H1 (cell line): ENCODE measurements at regions of chr11 and their contacts with region 1.

Region 1: GRCh38 chr11:20647976-20648565 is 21.3 kb upstream of the NELL1 start:
- DNase-seq: peak in 1 of 2 experiments; percentile 79
- H3K4me3 ChIP-seq: no peak overlapping the region
- H3K27ac ChIP-seq: no peak overlapping the region
- H3K4me1 ChIP-seq: peaks cover 0 to 5% (median 2%) of the 10 kb centered on the region in 4 experiments; a peak in 2 of 7 replicates
- H3K27me3 ChIP-seq: no peaks in the 10 kb centered on the region
- CTCF ChIP-seq: peak; percentile 4 to 88 (median 79)
- EP300 ChIP-seq: no peak
- POLR2A ChIP-seq: no peak
- RAD21 ChIP-seq: peak; percentile 90 to 96

Region 2: DNA sequence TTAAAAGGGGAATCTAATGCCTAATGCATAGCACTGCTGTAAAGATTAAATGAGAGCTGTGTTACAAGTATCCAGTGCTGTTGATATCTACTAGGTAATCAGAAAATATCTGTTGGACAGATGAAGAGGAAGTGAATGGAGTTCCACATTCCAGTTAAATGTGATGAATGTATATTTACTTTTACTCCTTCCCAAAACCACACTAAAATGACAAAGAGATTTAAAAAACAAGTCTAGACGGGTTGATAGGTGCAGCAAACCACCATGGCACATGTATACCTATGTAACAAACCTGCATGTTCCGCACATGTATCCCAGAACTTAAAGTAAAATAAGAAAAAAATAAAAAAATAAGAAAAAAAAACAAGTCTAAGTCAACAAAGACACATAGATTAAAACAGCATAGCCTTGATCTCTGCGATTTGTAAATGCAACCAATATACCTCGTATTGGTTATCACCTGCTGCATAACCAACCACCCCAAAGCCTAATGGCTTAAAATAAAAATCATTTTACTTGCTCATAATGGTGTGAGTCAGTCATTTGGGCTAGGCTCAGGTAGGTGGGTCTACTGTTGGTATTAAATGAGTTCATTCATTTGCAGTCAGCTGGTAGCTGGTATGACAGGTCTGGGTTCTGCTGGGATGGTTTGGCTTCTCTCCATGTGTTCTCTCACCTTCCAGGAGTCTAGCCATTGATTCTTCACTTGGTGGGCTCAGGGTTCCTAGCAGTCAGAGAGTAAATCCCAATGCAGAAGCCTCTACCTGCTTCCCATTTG is 88.4 kb before region 1 on chr11:
- CTCF ChIA-PET with region 1: no interaction called
- POLR2A ChIA-PET with region 1: no interaction called
- DNase-seq: no peak
- H3K4me3 ChIP-seq: no peak overlapping the region
- H3K27ac ChIP-seq: no peak overlapping the region
- H3K4me1 ChIP-seq: no peaks in the 10 kb centered on the region
- H3K27me3 ChIP-seq: no peaks in the 10 kb centered on the region
- CTCF ChIP-seq: no peak
- EP300 ChIP-seq: no peak
- POLR2A ChIP-seq: no peak
- RAD21 ChIP-seq: no peak

Region 3: DNA sequence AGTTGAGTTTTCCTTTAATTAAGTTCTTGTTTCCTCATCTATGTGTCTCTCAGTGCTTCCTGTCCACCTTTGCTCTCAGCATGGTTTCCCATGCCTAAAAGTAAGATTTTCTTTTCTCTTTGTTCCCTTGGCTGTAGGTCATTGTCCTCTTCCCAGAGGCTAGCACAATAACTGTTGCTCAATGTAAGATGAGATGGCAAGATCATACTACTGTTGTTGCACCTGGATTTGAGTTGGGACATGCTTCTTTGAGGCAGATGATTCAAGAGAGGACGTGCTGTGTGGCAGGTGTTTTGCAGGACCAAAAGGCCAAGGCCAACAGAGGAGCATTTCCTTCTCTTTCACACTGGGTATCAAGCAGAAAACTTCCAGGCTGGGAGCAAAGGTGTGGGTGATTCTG is 10.1 kb after region 1 on chr11:
- CTCF ChIA-PET with region 1: interaction called, 14 read pairs
- POLR2A ChIA-PET with region 1: no interaction called
- DNase-seq: no peak
- H3K4me3 ChIP-seq: no peak overlapping the region
- H3K27ac ChIP-seq: no peak overlapping the region
- H3K4me1 ChIP-seq: peaks cover 0 to 7% (median 5%) of the 10 kb centered on the region in 4 experiments; a peak in 5 of 7 replicates
- H3K27me3 ChIP-seq: no peaks in the 10 kb centered on the region
- CTCF ChIP-seq: no peak
- EP300 ChIP-seq: no peak
- POLR2A ChIP-seq: no peak
- RAD21 ChIP-seq: no peak

Region 4: GRCh38 chr11:20671856-20672546 is 23.9 kb after region 1 on chr11:
- CTCF ChIA-PET with region 1: interaction called, 51 read pairs
- POLR2A ChIA-PET with region 1: no interaction called
- DNase-seq: no peak
- H3K4me3 ChIP-seq: peak overlapping the region in 1 of 4 experiments; percentile 80; a peak in 1 of 8 replicates
- H3K27ac ChIP-seq: no peak overlapping the region
- H3K4me1 ChIP-seq: peaks cover 12 to 24% (median 13%) of the 10 kb centered on the region in 4 experiments; a peak in 6 of 7 replicates
- H3K27me3 ChIP-seq: peaks cover 43 to 56% (median 56%) of the 10 kb centered on the region in 4 experiments
- CTCF ChIP-seq: peak in 1 of 3 experiments; percentile 19; a peak in 1 of 4 replicates
- EP300 ChIP-seq: no peak
- POLR2A ChIP-seq: no peak
- RAD21 ChIP-seq: no peak

Region 5: GRCh38 chr11:20873054-20873453 is 225.0 kb after region 1 on chr11:
- CTCF ChIA-PET with region 1: interaction called, 38 read pairs
- POLR2A ChIA-PET with region 1: no interaction called
- DNase-seq: peak; percentile 41 to 66
- H3K4me3 ChIP-seq: no peak overlapping the region
- H3K27ac ChIP-seq: no peak overlapping the region
- H3K4me1 ChIP-seq: peaks cover 0 to 3% (median 1%) of the 10 kb centered on the region in 4 experiments; a peak in 2 of 7 replicates
- H3K27me3 ChIP-seq: no peaks in the 10 kb centered on the region
- CTCF ChIP-seq: peak; percentile 52 to 91 (median 83)
- EP300 ChIP-seq: no peak
- POLR2A ChIP-seq: no peak
- RAD21 ChIP-seq: peak; percentile 79 to 85

Region 6: DNA sequence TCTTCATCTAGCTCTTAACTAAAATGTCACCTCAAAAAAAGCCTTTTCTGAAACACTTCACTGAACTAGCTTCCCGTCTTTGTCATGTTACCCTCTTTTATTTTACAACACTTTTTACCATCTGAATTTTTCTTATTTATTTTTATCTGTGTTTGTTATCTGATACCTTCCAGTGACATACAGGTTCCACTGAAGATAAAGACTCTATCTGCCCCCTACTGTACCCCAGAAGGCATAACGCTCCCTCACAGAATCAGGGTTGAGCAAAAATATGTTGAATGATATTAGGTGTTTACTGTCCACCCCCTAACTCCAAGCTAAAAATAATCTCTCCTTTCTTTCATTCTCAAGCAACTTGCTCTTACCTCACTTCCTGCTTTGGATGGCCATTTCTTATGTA is 675.5 kb after region 1 on chr11:
- CTCF ChIA-PET with region 1: interaction called, 11 read pairs
- POLR2A ChIA-PET with region 1: no interaction called
- DNase-seq: no peak
- H3K4me3 ChIP-seq: no peak overlapping the region
- H3K27ac ChIP-seq: no peak overlapping the region
- H3K4me1 ChIP-seq: peaks cover 0 to 1% (median 0%) of the 10 kb centered on the region in 4 experiments; a peak in 1 of 7 replicates
- H3K27me3 ChIP-seq: no peaks in the 10 kb centered on the region
- CTCF ChIP-seq: peak in 2 of 3 experiments; percentile 48 to 58; a peak in 3 of 4 replicates
- EP300 ChIP-seq: no peak
- POLR2A ChIP-seq: no peak
- RAD21 ChIP-seq: peak; percentile 69 to 70